Cardiac septum (tissue), 1 donor: ENCODE measurements at regions of chr6 and their contacts with region 1.

Region 1: DNA sequence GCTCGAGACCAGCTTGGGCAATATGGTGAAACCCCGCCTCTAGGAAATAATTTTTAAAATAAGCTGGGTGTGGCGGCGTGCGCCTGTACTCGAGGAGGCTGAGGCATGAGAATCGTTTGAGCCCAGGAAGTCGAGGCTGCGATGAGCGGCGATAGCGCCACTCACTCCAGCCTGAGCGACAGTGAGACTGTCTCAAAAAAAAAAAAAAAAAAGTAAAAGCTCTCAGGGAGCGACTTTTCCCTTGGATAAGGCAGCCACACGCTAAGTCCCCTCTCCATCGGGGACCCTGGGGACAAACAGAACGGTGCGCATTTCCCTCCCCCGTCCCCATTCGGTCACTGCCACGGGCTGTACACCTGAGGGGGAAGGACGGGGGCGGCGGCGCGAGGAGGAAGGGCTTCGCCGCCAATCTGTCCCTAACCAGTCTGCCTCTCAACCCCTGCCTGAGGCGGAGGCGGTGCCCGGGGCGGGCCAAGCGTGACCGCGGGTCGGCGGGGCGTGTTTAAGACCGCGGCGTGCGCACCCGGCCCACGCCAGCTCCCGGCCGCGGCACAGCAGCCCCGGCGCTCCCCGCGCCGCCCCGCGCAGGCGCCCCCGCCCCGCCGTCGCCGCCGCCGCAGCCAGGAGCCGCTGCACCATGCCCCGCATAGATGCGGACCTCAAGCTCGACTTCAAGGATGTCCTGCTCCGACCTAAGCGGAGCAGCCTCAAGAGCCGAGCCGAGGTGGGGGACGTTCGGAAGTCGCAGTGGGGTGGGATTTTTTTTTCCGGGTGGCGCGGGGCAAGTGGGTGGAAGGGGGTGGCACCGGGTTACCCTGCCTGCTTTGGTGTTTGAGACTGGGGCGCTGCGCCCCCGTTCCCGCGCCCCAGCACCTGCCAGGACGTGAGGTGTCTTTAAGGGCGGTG is at the start of gene GMPR:
- DNase-seq: peak; percentile 93
- total RNA-seq, gene GMPR: 71.0 TPM

Region 2: DNA sequence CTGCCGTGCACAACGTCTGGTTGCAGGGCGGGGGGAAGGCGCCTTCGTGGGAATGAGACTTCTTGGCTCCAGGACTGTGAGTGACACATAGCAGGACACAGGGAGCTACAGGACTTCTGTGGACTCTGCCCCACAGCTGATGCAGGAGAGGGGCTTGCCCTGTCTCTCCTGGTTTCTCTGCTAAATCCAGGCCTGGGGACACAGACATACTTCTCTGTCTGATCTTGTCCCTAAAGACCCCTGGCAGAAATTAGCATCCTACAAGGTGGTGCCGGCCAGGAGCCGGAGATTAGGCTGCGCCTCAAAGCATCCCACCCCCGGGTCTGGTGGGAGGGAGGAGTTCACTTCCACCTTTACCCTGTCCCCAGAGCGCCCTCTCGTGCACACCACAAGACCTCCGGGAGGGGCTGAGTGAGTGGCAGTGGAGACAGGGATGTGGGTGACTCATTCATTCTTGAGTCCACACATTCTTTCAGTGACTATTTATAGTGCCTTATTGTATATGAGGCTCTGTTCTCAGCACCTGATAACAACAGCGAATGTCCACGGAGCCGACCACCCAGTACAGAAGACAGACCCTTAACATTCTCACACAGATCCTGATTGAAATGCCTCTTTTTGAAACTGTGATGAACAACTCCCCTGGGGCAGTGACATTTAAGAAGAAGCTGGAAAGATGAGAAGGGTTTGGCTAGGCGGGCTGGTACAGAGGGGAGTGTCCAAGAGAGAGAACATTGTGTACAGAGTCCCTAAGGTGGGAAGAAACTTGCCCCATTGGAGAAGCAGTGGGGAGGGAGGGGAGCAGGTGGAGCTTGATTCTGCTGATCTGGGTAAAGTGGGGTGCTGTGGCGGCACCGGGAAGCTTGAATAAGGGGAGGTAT is 39.0 kb after region 1 on chr6:
- intact Hi-C with region 1: loop called (anchors 2 kb)
- DNase-seq: peak; percentile 91

Region 3: GRCh38 chr6:16319813-16320532 is 81.7 kb after region 1 on chr6:
- intact Hi-C with region 1: loop called (anchors 5 kb)
- DNase-seq: peak; percentile 88

Region 4: DNA sequence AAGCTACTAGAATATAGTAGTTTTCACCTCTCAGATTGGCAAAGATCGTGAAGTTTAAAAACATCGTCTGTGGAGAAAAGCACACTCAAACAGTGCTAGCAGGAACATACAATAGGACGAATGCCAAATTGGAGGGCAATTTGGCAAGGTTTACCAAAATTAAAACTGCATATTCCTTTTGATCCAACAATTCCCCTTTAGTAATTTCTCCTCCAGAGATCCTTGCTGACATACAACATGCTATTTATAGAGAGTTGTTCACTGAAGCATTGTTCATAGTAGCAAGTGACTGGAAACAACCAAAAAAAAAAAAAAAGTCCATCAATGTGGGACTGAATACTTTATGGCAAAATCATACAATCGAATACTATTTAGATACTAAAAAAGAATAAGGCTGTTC is 320.8 kb after region 1 on chr6:
- intact Hi-C with region 1: no loop called
- DNase-seq: no peak

Region 5: DNA sequence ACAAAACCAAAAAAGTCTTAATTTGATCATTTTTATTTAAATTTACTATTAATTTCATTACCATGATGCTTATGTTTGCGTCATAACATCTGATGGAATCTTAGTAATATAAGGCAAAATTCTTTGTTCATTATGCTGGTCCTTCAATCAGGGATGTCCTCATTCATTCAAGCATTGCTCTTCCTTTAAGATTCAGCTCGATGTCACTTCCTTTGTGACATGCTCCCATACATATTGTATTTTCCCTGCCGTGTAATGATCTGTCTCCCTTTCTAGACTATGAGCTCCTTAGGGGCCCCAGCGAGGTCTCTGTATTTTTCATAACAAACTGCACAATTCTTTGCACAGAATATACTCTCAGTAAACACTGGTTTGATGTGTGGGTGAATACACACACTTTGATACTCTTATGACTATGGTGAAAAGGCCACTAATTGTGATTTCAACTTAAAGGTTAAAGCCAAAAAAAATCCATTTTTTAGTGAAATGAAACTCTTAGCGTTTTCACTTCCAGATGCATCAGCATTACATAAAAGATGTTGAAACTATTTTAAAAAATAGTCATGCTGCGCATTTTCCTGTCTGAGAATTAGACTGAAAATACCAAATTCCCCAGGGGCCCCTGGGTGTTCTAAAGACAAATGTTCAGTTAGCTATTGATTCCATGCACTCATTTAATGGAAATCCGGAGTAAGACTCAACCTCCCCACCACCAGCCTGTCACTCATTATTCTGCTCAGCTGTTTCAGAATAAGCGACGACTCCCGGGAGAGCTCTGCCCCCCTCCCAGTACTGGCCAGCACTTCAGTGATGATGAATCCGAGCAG is 353.3 kb after region 1 on chr6:
- intact Hi-C with region 1: no loop called
- DNase-seq: no peak